ENCODE measurements at regions of chr17 and their contacts with region 1.

Region 1: GRCh38 chr17:48215583-48216139 is 108.1 kb downstream of the SNX11 start:
- H3K4me3 ChIP-seq: no peak overlapping the region
- H3K27ac ChIP-seq: no peak overlapping the region
- H3K4me1 ChIP-seq: peaks cover 6% of the 10 kb centered on the region
- CTCF ChIP-seq: peak; percentile 75

Region 2: DNA sequence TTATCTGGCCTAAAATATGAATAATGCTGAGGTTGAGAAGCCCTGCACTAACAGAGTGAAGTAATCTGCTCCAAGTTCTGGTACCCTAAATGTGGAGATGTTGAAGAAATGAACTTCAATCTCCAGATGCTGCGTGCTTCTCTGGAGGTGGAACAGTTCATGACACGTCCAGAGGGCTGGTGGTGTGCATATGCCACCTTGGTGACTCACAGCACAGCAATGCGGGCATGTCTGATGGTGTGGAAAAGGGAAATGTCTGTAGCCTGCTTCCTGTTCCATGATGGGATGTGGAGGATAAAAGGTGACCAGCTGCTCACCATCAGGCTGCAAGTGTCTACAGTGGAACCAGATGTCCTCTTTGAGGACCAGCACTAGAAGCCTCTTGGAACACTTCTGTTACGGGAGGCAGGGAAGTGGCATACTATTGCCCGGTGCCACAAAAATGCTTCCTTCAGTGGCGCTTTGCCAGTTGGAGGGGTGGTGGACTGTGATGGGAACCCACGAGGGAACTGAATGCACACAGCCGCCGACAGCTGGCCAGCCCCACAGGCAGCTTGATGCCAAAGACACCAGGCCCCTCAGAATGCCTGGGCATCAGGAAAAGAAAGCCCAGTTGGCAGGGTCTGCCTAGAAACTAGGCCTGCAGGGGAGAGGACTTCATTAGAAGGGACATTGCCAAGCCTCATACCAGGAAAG is 88.2 kb before region 1 on chr17:
- CTCF ChIA-PET with region 1: no interaction called
- POLR2A ChIA-PET with region 1: no interaction called
- H3K4me3 ChIP-seq: no peak overlapping the region
- H3K27ac ChIP-seq: no peak overlapping the region
- H3K4me1 ChIP-seq: no peaks in the 10 kb centered on the region
- CTCF ChIP-seq: no peak

Region 3: DNA sequence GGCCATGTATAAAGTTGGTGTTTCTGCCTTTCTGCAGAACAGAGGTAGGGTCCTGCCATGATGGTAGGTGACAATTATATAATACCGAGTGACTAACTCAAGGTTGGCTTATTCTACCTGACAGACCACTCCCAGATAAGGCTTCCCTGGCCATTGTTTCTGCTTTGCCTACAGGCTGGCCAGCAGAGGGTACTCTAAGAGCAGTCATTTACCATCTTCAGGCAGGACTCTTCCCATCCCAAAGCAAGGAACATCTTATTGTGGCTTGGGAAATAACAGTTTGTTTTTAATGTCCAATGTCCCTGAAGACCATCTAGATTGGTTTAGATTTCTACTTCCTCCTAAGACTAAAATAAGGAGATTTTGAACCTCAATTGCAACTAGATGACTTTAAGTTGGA is 34.0 kb before region 1 on chr17:
- CTCF ChIA-PET with region 1: interaction called, 37 read pairs
- POLR2A ChIA-PET with region 1: no interaction called
- H3K4me3 ChIP-seq: no peak overlapping the region
- H3K27ac ChIP-seq: no peak overlapping the region
- H3K4me1 ChIP-seq: no peaks in the 10 kb centered on the region
- CTCF ChIP-seq: peak; percentile 75

Region 4: DNA sequence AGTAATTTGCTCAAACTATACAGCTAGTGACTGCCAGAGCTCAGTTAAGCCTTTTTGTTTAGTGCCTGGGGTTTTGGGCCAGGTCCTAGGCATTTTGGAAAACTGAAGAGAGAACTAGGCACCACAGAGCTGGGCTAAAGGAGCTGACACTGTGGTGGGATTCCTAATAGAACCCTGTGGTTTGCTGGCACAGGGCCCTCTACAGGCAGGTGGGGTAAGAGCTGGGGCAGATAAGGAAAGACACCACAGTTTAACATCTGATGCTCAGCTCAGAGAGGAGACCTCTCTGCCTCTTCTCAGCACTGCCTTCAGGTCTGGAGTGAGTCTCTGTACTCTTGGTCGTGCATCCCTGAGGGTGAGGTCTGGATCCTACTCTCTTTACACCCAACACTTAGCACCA is 13.1 kb after region 1 on chr17:
- CTCF ChIA-PET with region 1: interaction called, 33 read pairs
- POLR2A ChIA-PET with region 1: interaction called, 8 read pairs
- H3K4me3 ChIP-seq: no peak overlapping the region
- H3K27ac ChIP-seq: no peak overlapping the region
- H3K4me1 ChIP-seq: no peaks in the 10 kb centered on the region
- CTCF ChIP-seq: no peak

Region 5: GRCh38 chr17:48270896-48271295 is 55.2 kb after region 1 on chr17:
- CTCF ChIA-PET with region 1: interaction called, 221 read pairs
- POLR2A ChIA-PET with region 1: no interaction called
- H3K4me3 ChIP-seq: no peak overlapping the region
- H3K27ac ChIP-seq: no peak overlapping the region
- H3K4me1 ChIP-seq: peaks cover 5% of the 10 kb centered on the region
- CTCF ChIP-seq: no peak

Region 6: GRCh38 chr17:48374650-48375230 is 159.1 kb after region 1 on chr17:
- CTCF ChIA-PET with region 1: interaction called, 45 read pairs
- POLR2A ChIA-PET with region 1: no interaction called
- H3K4me3 ChIP-seq: no peak overlapping the region
- H3K27ac ChIP-seq: no peak overlapping the region
- H3K4me1 ChIP-seq: no peaks in the 10 kb centered on the region
- CTCF ChIP-seq: no peak

Region 7: GRCh38 chr17:48678141-48678971 is 462.7 kb after region 1 on chr17:
- CTCF ChIA-PET with region 1: interaction called, 10 read pairs
- POLR2A ChIA-PET with region 1: no interaction called
- H3K4me3 ChIP-seq: no peak overlapping the region
- H3K27ac ChIP-seq: no peak overlapping the region
- H3K4me1 ChIP-seq: no peaks in the 10 kb centered on the region
- CTCF ChIP-seq: peak; percentile 98